Sciatic nerve (tissue), 2 donors: ENCODE measurements at regions of chr3 and their contacts with region 1.

Region 1: DNA sequence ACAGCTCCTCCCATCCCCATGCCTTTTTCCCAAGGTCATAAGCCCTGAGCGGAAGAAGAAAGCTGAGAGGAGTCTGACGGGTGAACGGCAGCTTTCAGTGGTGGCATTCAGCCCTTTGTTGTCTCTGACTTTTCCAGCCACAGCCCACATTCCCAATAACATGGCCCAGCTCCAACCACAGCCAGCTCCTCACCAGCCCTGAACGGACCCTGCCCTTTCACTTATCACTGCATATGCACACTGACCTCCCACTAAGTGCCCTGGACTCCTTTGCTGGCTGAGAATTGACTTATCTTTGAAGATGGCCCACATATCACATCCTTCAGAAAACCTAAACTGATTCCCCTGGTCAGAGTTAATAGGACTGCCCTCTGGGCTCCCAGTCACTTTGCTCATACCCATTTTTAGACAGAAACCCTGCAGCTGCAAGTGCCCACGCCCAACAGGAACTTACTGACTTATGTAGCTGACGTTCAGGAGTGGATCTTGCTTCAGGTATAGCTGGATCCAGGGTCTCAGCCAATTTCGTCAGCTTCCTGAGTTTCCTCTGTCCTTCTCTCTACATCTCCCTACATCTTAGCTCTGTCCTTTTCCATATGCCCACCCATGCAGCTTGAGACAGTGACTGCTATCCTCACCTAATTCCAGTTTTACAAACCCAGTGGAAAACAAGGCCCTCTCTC is 348.5 kb upstream of the PROK2 start:
- DNase-seq: no peak
- ATAC-seq: no peak

Region 2: DNA sequence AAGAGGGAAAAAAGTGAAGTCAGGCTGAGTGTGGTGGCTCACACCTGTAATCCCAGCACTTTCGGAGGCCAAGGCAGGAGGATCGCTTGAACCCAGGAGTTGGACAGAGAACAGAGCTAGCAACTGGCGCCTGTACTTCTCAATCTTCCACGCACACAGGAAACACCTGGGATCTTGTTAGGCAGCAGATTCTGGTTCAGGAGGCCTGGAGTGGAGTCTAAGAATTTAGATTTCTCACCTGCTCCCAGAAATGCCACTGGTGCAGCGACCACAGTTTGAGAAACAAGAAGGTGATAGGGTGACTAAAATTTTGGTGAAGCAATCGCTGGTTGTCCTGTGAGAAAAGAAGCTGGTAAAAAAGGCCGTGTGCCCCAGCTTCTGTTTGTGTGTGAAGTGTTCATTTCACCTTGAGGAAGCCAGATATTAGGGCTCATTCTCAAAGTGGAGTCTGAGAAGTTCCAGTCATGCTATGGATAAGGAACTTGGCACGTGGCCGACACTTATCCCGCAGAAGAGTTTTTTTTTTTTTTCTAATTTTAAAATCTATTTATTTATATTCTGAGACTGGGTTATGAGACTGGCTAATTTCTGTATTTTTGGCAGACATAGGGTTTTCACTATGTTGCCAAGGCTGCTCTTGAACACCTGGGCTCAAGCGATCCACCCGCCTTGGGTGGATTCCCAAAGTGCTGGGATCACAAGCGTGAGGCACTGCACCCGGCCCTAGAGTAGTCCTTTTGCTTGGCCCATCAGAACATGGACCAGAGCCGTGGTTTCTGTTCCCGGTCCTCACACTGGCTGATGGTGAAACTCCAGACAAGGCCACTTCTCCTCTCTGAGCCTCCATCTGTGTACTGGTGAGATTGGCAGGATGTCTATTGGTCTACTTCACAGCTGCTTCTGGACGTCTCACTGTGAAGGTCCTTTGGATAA is 23.9 kb before region 1 on chr3:
- intact Hi-C with region 1: no loop called
- DNase-seq: no peak
- ATAC-seq: peak; percentile 22

Region 3: GRCh38 chr3:72193771-72194463 is 60.4 kb after region 1 on chr3:
- intact Hi-C with region 1: loop called (anchors 2 kb)
- DNase-seq: no peak
- ATAC-seq: no peak